ENCODE measurements at regions of chr16 and their contacts with region 1.

Region 1: GRCh38 chr16:23556881-23557778 is at the starts of genes EARS2 and UBFD1:
- DNase-seq: peak; percentile 95
- H3K4me3 Mint-ChIP-seq: peak within 1 kb of the TSS; percentile 95
- H3K27ac Mint-ChIP-seq: peak within 1 kb of the TSS; percentile 95
- H3K4me1 Mint-ChIP-seq: peaks cover 43% of the 10 kb centered on the region
- H3K27me3 Mint-ChIP-seq: no peaks in the 10 kb centered on the region
- total RNA-seq, gene EARS2: 18.1 to 18.5 TPM
- total RNA-seq, gene UBFD1: 39.1 to 39.5 TPM

Region 2: DNA sequence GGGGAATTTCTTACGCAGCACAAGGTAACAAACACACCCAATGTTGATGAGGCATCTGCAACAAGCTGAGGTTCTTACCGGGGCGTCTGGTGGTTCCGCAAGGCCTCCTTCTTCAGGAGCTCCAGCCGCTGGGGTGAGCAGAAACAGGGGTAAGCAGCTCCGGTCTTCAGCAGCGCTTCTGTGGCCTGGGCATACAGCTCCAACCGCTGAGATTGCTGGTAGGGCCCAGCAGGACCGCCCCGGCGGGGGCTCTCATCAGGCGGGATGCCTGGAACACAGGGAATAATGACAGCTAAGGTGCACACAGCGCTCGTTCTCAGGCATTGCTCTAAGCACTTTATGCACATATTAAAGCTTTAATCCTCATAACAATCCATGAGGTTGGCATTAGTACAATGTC is 12.7 kb before region 1 on chr16:
- CTCF ChIA-PET with region 1: interaction called, 13 read pairs
- POLR2A ChIA-PET with region 1: no interaction called
- DNase-seq: no peak
- H3K4me3 Mint-ChIP-seq: no peak overlapping the region
- H3K27ac Mint-ChIP-seq: no peak overlapping the region
- H3K4me1 Mint-ChIP-seq: no peaks in the 10 kb centered on the region
- H3K27me3 Mint-ChIP-seq: no peaks in the 10 kb centered on the region

Region 3: DNA sequence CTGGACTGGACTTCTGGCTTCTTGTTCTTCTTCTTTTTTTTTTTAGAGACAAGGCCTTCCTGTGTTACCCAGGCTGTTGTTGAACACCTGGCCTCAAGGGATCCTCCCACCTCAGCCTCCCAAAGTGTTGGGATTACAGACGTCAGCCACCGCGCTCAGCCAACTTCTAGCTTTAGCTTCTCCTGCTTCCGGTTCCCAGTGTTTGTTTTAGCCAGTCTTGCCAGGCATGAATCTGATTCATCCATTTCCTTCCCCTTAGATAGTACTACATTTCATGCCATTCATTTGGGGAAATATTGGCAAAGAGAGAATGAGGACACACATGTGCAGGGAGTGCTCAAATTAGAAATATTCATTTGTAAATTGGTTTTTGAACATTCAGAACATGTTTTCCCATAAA is 51.1 kb after region 1 on chr16:
- CTCF ChIA-PET with region 1: no interaction called
- POLR2A ChIA-PET with region 1: no interaction called
- DNase-seq: no peak
- H3K4me3 Mint-ChIP-seq: no peak overlapping the region
- H3K27ac Mint-ChIP-seq: peak overlapping the region; percentile 25
- H3K4me1 Mint-ChIP-seq: no peaks in the 10 kb centered on the region
- H3K27me3 Mint-ChIP-seq: no peaks in the 10 kb centered on the region